PC-9 (cell line): ENCODE measurements at regions of chr1 and their contacts with region 1.

Region 1: DNA sequence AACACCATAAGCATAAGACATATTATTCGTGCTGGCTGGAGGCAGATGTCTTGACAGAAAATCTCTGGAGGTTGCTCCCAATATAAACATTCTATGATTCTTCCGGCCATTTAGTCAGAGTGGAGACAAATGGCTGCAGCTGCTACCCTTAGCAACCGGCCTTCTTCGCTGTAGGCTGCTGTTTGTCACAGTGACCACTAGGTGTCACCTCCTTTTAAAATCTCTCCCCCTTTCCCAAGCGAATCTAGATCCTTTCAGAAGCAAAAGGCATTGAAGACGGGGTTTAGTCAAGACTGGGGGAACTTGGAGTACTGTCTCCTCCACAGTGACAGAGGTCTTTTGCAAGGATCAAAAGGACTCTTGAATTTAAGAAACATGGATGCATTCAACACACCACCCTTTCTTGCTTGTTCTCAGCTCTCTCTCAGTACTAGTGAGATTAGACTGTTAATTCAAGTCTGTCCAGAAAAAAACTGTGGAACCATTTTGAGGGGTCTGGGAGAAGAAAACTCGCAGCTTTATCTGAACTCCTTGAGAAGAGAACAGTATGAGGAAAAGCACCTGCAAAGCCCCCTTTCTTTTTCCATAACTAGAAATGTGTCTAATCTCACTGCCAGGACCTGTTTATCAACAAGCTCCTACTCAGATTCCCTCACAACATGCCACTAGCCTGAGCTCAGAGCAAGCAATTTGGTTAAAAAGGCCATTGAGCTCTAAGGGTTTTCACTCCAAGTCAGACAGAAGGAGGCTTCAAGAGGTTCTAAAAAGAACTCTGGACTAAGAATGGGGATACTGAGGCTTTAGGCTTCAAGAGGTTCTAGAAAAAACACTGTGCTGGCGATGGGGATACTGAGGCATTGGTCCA is 408.3 kb upstream of the PLXNA2 start:
- DNase-seq: peak in 1 of 2 experiments; percentile 37
- H3K4me3 ChIP-seq: no peak overlapping the region
- H3K27ac ChIP-seq: no peak overlapping the region
- H3K4me1 ChIP-seq: no peaks in the 10 kb centered on the region
- H3K27me3 ChIP-seq: peaks cover 8% of the 10 kb centered on the region; the same call in 1 of the 2 replicates
- CTCF ChIP-seq: peak; percentile 88

Region 2: GRCh38 chr1:209207701-209208286 is 555.3 kb after region 1 on chr1:
- CTCF ChIA-PET with region 1: no interaction called
- POLR2A ChIA-PET with region 1: no interaction called
- intact Hi-C with region 1: loop called (anchors 5 kb)
- DNase-seq: peak in 1 of 2 experiments; percentile 47
- H3K4me3 ChIP-seq: no peak overlapping the region
- H3K27ac ChIP-seq: no peak overlapping the region
- H3K4me1 ChIP-seq: no peaks in the 10 kb centered on the region
- H3K27me3 ChIP-seq: no peaks in the 10 kb centered on the region; the same call in 1 of the 2 replicates
- CTCF ChIP-seq: 0 out of 2 replicates have a peak, but pooled peaks have one; percentile 20